ENCODE measurements at regions of chr7 and their contacts with region 1.

Region 1: GRCh38 chr7:121081327-121081936 is 92.9 kb downstream of the CPED1 start:
- DNase-seq: peak; percentile 5
- ATAC-seq: peak; percentile 81
- H3K4me3 ChIP-seq: no peak overlapping the region
- H3K27ac ChIP-seq: no peak overlapping the region
- H3K4me1 ChIP-seq: no peaks in the 10 kb centered on the region
- H3K27me3 ChIP-seq: peaks cover 0 to under 1% of the 10 kb centered on the region in 2 experiments; a peak in 2 of 4 replicates
- CTCF ChIP-seq: peak; percentile 57 to 72 (median 57); a peak in 5 of 6 replicates
- EP300 ChIP-seq: no peak
- POLR2A ChIP-seq: no peak
- RAD21 ChIP-seq: peak; percentile 77

Region 2: DNA sequence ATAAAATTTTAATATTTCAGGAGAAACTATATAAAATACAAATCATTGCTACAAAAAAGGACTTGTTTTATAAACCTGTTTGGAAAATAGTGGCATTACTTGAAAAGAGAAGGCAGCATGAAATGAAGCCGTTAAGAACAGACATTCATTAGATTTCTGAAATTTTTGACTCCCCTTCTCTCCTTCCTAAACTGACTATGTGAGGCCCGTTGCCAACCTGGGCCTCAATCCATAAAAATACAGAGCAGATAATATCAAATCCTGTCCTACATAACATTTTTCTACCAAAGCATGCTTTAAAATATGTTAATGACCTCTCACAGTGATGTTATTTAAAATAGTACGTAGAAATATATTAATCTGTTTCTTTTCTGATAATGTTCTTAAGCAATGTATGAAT is 165.3 kb before region 1 on chr7:
- CTCF ChIA-PET with region 1: no interaction called
- POLR2A ChIA-PET with region 1: no interaction called
- RAD21 ChIA-PET with region 1: no interaction called
- SMC1A ChIA-PET with region 1: no interaction called
- in situ Hi-C with region 1: no loop called
- intact Hi-C with region 1: no loop called
- DNase-seq: no peak
- ATAC-seq: no peak
- H3K4me3 ChIP-seq: no peak overlapping the region
- H3K27ac ChIP-seq: no peak overlapping the region
- H3K4me1 ChIP-seq: no peaks in the 10 kb centered on the region
- H3K27me3 ChIP-seq: no peaks in the 10 kb centered on the region
- CTCF ChIP-seq: no peak
- EP300 ChIP-seq: no peak
- POLR2A ChIP-seq: no peak
- RAD21 ChIP-seq: no peak

Region 3: GRCh38 chr7:121011401-121011800 is 70.0 kb before region 1 on chr7:
- CTCF ChIA-PET with region 1: interaction called, 10 read pairs
- POLR2A ChIA-PET with region 1: no interaction called
- RAD21 ChIA-PET with region 1: interaction called, 3 read pairs
- SMC1A ChIA-PET with region 1: no interaction called
- in situ Hi-C with region 1: no loop called
- intact Hi-C with region 1: no loop called
- DNase-seq: no peak
- ATAC-seq: no peak
- H3K4me3 ChIP-seq: no peak overlapping the region
- H3K27ac ChIP-seq: no peak overlapping the region
- H3K4me1 ChIP-seq: no peaks in the 10 kb centered on the region
- H3K27me3 ChIP-seq: no peaks in the 10 kb centered on the region; a peak in 2 of 4 replicates
- CTCF ChIP-seq: no peak
- EP300 ChIP-seq: no peak
- POLR2A ChIP-seq: no peak
- RAD21 ChIP-seq: no peak

Region 4: GRCh38 chr7:121057878-121058277 is 23.6 kb before region 1 on chr7:
- CTCF ChIA-PET with region 1: interaction called, 13 read pairs
- POLR2A ChIA-PET with region 1: no interaction called
- RAD21 ChIA-PET with region 1: no interaction called
- SMC1A ChIA-PET with region 1: interaction called, 3 read pairs
- in situ Hi-C with region 1: no loop called
- intact Hi-C with region 1: no loop called
- DNase-seq: no peak
- ATAC-seq: no peak
- H3K4me3 ChIP-seq: no peak overlapping the region
- H3K27ac ChIP-seq: no peak overlapping the region
- H3K4me1 ChIP-seq: no peaks in the 10 kb centered on the region
- H3K27me3 ChIP-seq: no peaks in the 10 kb centered on the region
- CTCF ChIP-seq: no peak
- EP300 ChIP-seq: no peak
- POLR2A ChIP-seq: no peak
- RAD21 ChIP-seq: no peak

Region 5: DNA sequence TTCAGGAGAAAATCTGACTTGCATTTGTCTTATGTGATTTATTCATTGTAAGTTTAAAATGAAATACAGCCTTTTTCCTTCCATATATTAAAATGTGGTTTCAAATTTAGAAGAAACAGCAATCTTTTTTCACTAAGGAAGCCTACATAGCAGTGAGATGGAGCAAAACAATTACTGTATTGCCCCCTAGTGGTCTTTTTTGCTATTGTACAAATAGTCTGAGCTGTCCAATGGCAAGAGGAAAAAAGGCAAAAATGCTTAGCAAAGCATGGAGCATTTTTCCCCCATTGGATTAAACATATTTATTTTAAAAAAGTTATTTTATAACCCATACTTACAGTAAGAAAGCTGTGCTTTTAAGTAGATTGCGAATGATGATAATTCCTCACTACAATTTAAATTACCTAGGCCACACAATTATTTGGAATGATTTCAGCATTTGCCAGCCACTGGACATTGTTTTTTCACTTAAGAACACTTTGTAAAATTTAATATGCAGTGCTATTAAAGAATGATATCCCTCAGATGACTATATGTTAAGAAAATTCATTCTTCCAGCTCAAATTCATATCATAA is 26.6 kb after region 1 on chr7:
- CTCF ChIA-PET with region 1: interaction called, 13 read pairs
- POLR2A ChIA-PET with region 1: no interaction called
- RAD21 ChIA-PET with region 1: interaction called, 5 read pairs
- SMC1A ChIA-PET with region 1: no interaction called
- in situ Hi-C with region 1: no loop called
- intact Hi-C with region 1: no loop called
- DNase-seq: peak; percentile 11
- ATAC-seq: peak; percentile 96
- H3K4me3 ChIP-seq: no peak overlapping the region
- H3K27ac ChIP-seq: no peak overlapping the region
- H3K4me1 ChIP-seq: no peaks in the 10 kb centered on the region
- H3K27me3 ChIP-seq: no peaks in the 10 kb centered on the region; a peak in 2 of 4 replicates
- CTCF ChIP-seq: peak; percentile 65 to 76 (median 74)
- EP300 ChIP-seq: no peak
- POLR2A ChIP-seq: no peak
- RAD21 ChIP-seq: peak; percentile 74